Activated CD8-positive, alpha-beta T cell treated with anti-CD3 and anti-CD28 coated beads for 36 hours (primary cell): ENCODE measurements at regions of chr12 and their contacts with region 1.

Region 1: DNA sequence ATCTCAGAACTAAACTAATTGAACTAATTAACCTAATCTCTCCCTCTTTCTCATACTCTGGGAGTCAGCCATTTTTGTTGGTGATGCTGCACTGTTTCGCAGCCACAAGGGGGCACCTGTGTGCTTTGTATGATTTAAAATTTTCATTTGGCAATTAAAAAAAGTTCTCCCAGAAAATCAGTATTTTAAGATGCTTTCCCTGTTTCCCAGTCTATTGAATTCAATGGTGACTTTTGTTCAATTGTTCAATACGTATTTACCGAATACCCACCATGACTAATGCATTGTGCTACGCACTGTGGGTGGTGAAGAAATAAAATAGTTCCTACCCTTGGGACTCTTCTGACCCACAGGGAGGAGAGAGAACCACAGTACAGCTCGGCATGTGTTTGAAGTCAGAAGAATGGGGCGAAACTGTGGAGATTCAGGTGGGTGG is 63.7 kb downstream of the ZNF664 start:
- DNase-seq: peak; percentile 54
- ATAC-seq: peak; percentile 62
- H3K4me3 Mint-ChIP-seq: no peak overlapping the region
- H3K27ac Mint-ChIP-seq: no peak overlapping the region
- H3K4me1 Mint-ChIP-seq: no peaks in the 10 kb centered on the region
- H3K27me3 Mint-ChIP-seq: no peaks in the 10 kb centered on the region
- CTCF ChIP-seq: peak; percentile 99

Region 2: DNA sequence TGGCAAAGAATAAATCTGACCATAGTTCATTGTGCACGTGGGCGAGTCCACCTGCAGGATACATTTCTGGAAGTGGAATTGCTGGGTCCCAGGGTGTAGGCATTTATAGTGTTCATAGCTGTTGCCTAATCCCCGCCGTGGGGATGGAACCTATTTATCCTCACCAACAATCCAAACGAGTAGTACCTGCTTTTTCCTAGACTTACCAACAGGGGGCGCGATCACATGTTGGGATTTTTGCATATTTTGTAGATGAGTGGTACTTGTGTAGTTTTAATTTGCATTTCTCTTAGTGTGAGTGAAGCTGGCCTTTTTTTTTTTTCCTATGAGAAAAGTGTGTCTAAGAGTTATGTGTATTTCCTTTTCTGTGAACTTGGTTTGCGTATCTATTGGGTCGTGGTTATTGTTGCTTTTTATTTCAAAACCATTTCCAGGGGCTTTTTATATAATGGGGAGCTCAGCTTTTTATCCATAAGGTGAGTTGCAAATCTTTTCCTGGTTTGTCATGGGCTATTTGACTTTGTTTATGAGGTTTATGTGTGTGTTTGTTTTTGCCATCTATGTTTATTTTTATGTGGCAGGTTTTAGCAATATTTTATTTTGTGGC is 131.3 kb before region 1 on chr12:
- CTCF ChIA-PET with region 1: interaction called, 14 read pairs
- POLR2A ChIA-PET with region 1: no interaction called
- intact Hi-C with region 1: no loop called
- DNase-seq: peak; percentile 76
- ATAC-seq: peak; percentile 63
- H3K4me3 Mint-ChIP-seq: no peak overlapping the region
- H3K27ac Mint-ChIP-seq: no peak overlapping the region
- H3K4me1 Mint-ChIP-seq: peaks cover 13% of the 10 kb centered on the region
- H3K27me3 Mint-ChIP-seq: peaks cover 2% of the 10 kb centered on the region
- CTCF ChIP-seq: peak; percentile 83

Region 3: DNA sequence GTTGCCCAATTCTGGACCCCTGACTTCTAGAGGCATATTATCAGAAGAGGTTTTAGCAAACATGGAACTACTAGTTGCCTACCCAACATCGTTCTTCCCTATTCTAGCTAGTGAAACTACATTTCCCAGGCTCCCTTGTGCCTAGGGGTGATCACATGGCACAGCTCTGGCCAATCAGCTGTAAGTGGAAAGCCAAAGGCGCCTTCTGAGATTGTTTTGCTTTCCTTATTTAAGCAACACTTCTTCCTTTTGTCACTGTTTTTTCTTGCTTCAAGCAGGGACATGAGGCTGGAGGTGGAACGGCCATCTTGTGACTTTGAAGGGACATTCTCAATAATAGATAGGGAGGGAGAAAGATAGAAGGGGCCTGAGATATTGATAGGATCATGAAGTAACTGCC is 73.1 kb after region 1 on chr12:
- CTCF ChIA-PET with region 1: no interaction called
- POLR2A ChIA-PET with region 1: no interaction called
- intact Hi-C with region 1: no loop called
- DNase-seq: peak; percentile 47
- ATAC-seq: peak; percentile 61
- H3K4me3 Mint-ChIP-seq: no peak overlapping the region
- H3K27ac Mint-ChIP-seq: peak overlapping the region; percentile 40
- H3K4me1 Mint-ChIP-seq: no peaks in the 10 kb centered on the region
- H3K27me3 Mint-ChIP-seq: no peaks in the 10 kb centered on the region
- CTCF ChIP-seq: no peak

Region 4: GRCh38 chr12:124203173-124203572 is 166.5 kb after region 1 on chr12:
- CTCF ChIA-PET with region 1: no interaction called
- POLR2A ChIA-PET with region 1: no interaction called
- intact Hi-C with region 1: no loop called
- DNase-seq: no peak
- ATAC-seq: no peak
- H3K4me3 Mint-ChIP-seq: no peak overlapping the region
- H3K27ac Mint-ChIP-seq: no peak overlapping the region
- H3K4me1 Mint-ChIP-seq: no peaks in the 10 kb centered on the region
- H3K27me3 Mint-ChIP-seq: peaks cover 3% of the 10 kb centered on the region
- CTCF ChIP-seq: no peak

Region 5: DNA sequence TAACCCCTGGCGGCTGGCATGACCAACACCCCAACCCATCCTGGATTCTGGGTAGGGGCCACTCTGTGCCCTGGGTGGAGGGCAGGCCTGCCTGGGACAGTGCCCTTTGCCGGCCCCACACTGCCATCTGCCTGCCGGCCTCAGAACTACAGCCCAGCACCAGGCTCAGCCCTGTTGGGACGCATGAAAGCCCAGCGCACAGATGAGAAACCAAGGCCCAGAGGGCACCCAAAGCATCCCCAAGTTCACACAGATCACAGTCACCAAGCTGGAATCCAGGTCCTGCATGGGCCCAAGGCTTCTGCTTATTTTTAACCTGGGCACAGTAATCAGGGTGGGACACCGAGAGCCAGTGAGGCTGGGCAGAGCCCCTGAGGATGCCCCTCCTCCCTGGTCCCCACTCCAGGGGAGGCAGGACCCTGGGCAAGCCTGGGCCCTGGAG is 284.4 kb after region 1 on chr12:
- CTCF ChIA-PET with region 1: interaction called, 13 read pairs
- POLR2A ChIA-PET with region 1: interaction called, 3 read pairs
- intact Hi-C with region 1: loop called (anchors 2 kb)
- DNase-seq: peak; percentile 80
- ATAC-seq: peak; percentile 96
- H3K4me3 Mint-ChIP-seq: no peak overlapping the region
- H3K27ac Mint-ChIP-seq: no peak overlapping the region
- H3K4me1 Mint-ChIP-seq: no peaks in the 10 kb centered on the region
- H3K27me3 Mint-ChIP-seq: no peaks in the 10 kb centered on the region
- CTCF ChIP-seq: peak; percentile 93

Region 6: DNA sequence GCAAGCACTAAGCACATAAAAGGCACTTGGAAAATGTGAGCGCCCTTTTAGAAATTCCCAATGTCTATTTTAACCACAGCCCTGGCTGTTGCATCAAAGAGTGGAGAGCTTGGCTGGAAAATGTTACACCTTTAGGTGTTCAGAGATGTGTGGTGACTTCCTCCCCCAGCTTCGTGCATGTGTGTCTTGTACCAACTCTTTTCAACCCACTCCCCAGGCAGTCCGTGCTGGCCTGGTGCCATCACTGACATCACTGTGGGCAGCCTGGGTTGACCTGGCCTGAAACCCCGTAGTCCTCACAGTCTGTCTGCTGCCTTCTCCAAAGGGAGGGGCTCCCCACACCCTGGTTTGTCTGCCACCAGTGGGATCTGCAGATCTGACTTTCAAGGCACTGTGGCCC is 725.2 kb after region 1 on chr12:
- CTCF ChIA-PET with region 1: interaction called, 10 read pairs
- POLR2A ChIA-PET with region 1: no interaction called
- intact Hi-C with region 1: no loop called
- DNase-seq: peak; percentile 72
- ATAC-seq: peak; percentile 72
- H3K4me3 Mint-ChIP-seq: no peak overlapping the region
- H3K27ac Mint-ChIP-seq: peak overlapping the region; percentile 61
- H3K4me1 Mint-ChIP-seq: peaks cover 35% of the 10 kb centered on the region
- H3K27me3 Mint-ChIP-seq: peaks cover 4% of the 10 kb centered on the region
- CTCF ChIP-seq: no peak